Right ventricle myocardium inferior (tissue), 1 donor: ENCODE measurements at regions of chr12 and their contacts with region 1.

Region 1: GRCh38 chr12:19757317-19757877 is 318.1 kb downstream of the AEBP2 start:
- DNase-seq: no peak
- ATAC-seq: peak; percentile 42

Region 2: GRCh38 chr12:19665121-19665900 is 92.1 kb before region 1 on chr12:
- intact Hi-C with region 1: no loop called
- DNase-seq: no peak
- ATAC-seq: no peak

Region 3: DNA sequence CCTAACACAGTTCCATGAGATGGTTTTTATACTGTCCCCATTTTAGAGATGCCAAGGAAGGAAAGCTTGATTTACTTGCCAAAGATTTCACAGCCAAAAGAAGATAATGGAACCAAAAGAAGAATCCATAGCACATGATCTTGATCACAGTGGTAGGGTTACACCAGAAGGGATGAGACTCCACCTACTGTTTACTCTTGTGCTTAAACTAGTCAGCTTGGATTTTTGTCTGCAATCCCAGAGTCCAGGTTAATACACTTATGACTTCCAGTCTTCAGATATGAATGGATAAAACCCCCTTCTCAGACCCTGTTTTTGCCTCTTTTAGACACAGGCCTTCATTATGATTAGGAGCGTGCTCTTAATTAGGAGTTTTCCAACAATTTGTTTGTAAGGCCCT is 136.1 kb after region 1 on chr12:
- intact Hi-C with region 1: loop called (anchors 5 kb)
- DNase-seq: no peak
- ATAC-seq: peak; percentile 60

Region 4: DNA sequence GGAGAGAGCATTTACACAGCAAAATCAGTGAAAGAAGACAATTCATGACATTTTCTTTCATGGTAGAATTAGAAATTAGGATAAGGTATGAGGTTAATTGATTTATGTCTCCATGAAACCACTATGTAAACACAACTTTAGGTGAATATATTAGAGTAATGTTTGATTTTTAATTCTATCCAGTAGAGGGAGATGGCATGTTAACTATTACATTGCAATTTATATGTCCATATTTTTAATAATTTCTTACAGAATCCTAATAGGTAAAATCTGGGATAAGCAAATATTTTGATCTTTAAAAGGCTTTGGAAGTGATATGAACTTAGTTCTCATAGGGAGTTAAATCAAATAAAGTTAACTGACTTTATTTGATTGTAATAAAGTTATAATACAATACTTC is 237.6 kb after region 1 on chr12:
- intact Hi-C with region 1: loop called (anchors 10 kb)
- DNase-seq: no peak
- ATAC-seq: no peak

Region 5: DNA sequence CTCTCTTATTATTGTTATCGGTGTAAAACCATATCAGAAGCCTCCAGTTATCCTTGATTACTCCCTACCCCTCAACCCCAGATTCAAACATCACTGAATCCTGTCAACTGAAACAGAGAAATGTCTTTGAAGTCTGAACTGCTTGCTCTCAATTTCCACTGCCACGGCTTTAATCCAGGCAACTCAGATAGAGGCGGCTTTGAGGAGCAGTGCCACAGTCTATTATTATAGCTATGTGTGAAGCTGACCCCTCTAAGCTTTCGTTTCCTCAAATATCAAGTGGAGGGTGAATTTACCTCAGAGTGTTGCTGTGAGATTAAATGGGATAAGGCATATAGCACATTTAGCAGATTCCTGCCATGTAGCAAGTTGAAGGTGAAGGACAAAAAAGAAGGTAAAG is 562.0 kb after region 1 on chr12:
- intact Hi-C with region 1: loop called (anchors 2 kb)
- DNase-seq: no peak
- ATAC-seq: peak; percentile 68